Aorta (tissue), 5 donors: ENCODE measurements at regions of chrX and their contacts with region 1.

Region 1: GRCh38 chrX:74431797-74432196 is 10.5 kb downstream of the SLC16A2 start:
- DNase-seq: no peak
- ATAC-seq: no peak
- H3K4me3 ChIP-seq: no peak overlapping the region
- H3K27ac ChIP-seq: no peak overlapping the region
- H3K4me1 ChIP-seq: no peaks in the 10 kb centered on the region
- H3K27me3 ChIP-seq: no peaks in the 10 kb centered on the region

Region 2: DNA sequence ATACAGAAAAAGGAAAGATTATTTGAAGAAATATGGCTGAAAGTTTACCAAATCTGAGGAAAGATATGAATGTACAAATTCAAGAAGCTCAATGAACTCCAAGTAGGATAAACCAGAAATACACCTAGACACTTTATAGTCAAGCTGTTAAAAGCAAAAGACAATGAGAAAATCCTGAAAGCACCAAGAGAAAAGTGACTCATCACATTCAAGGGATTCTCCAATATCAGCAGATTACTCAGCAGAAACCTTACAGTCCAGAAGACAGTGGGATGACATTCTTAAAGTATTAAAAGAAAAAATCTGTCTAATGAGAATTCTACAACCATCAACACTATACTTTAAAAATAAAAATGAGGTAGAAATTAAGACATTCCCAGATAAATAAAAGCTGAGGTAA is 351.6 kb before region 1 on chrX:
- intact Hi-C with region 1: no loop called
- DNase-seq: no peak
- ATAC-seq: no peak
- H3K4me3 ChIP-seq: no peak overlapping the region
- H3K27ac ChIP-seq: no peak overlapping the region
- H3K4me1 ChIP-seq: no peaks in the 10 kb centered on the region
- H3K27me3 ChIP-seq: no peaks in the 10 kb centered on the region

Region 3: DNA sequence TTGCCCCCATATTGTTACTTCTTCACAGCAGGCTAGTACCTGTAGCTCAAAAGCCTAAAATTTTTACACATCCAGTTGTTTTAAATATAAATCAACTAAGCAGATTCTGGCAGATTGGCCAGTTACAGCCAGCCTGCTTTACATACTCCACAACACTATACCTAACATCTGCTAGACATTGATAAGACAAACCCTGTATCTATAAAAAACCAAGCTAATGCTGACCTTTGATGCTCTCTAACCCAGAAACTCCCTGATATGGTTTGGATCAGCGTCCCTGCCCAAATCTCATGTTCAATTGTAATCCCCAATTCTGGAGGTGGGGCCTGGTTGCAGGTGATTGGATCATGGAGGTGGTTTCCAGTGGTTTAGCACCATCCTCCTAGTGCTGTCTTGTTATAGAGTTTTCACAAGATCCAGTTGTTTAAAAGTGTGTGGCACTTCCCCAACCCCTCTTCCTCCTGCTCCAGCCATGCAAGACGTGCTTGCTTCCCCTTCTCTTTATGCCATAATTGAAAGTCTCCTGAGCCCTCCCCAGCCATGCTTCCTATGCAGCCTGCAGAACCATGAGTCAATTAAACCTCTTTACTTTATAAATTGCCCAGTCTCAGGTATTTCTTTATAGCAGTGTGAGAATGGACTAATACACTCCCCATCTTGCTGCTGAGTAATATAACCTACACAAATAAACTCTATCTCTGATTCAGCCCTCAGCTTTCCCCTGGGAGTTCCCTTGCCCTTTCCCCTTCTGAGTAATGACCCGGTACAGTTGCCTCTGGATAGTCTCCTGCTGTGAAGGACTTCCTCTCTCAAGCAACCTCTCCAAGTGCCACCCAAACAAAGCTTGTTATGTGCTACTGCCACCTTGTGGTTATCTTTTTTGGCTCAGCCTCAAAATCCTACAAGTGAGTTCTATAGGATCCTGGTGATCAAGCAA is 88.2 kb before region 1 on chrX:
- intact Hi-C with region 1: no loop called
- DNase-seq: peak in 1 of 2 donors; percentile 51
- ATAC-seq: peak; percentile 74
- H3K4me3 ChIP-seq: no peak overlapping the region
- H3K27ac ChIP-seq: no peak overlapping the region
- H3K4me1 ChIP-seq: no peaks in the 10 kb centered on the region
- H3K27me3 ChIP-seq: no peaks in the 10 kb centered on the region

Region 4: GRCh38 chrX:74371425-74372222 is 60.2 kb before region 1 on chrX:
- intact Hi-C with region 1: loop called in 1 of 2 experiments (anchors 10 kb)
- DNase-seq: no peak
- ATAC-seq: no peak
- H3K4me3 ChIP-seq: no peak overlapping the region
- H3K27ac ChIP-seq: no peak overlapping the region
- H3K4me1 ChIP-seq: no peaks in the 10 kb centered on the region
- H3K27me3 ChIP-seq: no peaks in the 10 kb centered on the region